AG04449 (cell line): ENCODE measurements at regions of chr14 and their contacts with region 1.

Region 1: DNA sequence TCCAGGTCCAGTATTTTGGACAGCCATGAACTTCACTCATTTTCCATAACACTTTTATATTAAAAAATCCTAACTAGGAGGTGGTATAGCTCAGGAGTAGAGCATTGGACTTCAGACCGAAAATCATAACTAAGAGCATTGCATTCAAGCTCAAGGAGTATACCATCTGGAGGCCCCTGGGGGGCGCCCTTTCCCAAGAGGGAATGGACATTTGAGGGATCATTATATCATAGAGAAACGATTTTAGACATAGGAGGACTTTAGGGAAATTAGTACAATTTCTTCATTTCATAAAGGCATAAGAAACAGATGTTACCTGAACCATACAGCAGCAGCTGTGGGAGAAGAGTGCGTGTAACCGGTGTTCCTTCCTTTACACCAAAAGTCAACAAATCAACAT is 5.2 kb upstream of the ATG14 start:
- DNase-seq: no peak
- H3K4me3 ChIP-seq: no peak overlapping the region
- CTCF ChIP-seq: peak; percentile 27

Region 2: DNA sequence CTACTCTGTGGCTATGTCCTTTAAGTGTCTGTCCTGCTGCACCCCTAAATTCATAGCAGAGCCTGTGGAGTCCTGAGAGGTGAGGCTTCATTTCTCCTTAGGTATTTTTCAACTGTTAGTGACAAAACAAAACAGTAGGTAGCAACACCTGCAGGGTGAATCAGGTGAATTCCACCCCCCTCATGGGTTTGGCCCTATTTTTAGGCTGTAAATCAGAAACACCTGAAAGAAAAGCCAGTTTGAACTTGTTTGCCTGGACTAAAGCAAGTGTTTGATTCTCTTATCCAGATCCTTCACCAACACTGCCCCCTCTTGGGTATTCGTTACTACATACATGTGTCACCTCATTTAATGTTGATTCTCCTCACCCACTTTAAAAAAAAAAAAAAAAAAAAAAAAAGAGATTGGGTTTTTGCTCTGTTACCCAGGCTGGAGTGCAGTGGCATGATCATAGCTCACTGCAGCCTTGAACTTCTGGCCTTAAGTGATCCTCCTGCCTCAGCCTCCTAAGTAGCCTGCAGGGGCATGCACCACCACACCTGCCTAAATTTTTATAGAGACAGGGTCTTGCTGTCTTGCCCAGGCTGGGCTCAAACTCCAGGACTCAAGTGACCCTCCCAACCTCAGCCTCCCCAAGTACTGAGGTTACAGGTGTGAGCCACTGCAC is 13.3 kb after region 1 on chr14:
- CTCF ChIA-PET with region 1: interaction called, 66 read pairs
- POLR2A ChIA-PET with region 1: no interaction called
- DNase-seq: no peak
- H3K4me3 ChIP-seq: no peak overlapping the region
- CTCF ChIP-seq: peak; percentile 44